ENCODE measurements at regions of chr3 and their contacts with region 1.

Region 1: DNA sequence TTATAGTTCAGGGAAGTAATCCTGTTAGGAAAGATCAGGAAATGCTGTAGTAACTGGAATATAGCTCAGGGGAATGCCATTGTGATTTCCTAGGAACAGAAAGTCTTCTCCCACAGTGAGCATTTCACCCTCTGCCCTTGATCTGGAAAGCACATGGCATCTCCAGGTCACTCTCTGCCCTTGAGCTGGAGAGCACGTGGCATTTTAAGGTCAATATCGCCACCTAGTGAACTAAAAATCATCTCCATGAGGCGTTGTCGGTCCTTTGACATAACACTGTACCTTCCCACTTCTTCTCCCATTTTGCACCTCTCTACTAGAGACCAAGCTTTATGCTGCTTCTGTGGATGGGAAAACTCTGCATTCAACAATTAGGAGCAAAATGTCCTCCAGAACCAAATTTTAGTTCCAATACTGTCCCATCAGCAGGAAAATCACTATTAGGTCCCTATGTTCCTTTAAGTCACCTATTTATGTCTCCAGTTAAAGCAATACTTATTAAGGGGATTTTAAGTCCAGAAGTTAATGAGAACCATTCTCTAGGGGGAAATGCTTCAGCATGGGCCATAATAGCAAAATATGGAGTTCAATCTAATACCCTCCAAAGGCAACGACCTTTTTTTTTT is 54.7 kb upstream of the GK5 start:
- DNase-seq: peak; percentile 64
- H3K4me3 Mint-ChIP-seq: no peak overlapping the region
- H3K27ac Mint-ChIP-seq: no peak overlapping the region
- H3K4me1 Mint-ChIP-seq: peaks cover 13% of the 10 kb centered on the region
- H3K27me3 Mint-ChIP-seq: no peaks in the 10 kb centered on the region
- CTCF ChIP-seq: peak; percentile 84

Region 2: DNA sequence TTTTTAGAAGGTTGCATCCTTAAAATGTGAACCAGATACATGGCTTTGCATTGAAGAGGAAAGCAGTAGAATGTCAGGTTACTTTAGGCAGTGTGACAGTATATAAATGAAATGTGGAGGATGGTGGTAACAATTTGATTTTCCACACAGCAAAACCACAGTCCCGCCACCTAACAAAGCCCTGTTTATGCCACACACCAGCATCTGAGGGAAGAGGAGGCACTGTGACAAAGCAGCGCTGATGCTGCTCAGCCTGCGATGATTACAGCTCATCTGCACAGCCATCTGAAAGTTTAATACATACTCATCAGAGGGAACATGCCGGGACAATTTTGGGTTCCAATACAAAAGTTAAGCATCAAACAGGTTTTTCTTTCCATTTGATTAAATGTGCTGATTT is 533.1 kb before region 1 on chr3:
- CTCF ChIA-PET with region 1: no interaction called
- intact Hi-C with region 1: loop called (anchors 10 kb)
- DNase-seq: no peak
- H3K4me3 Mint-ChIP-seq: no peak overlapping the region
- H3K27ac Mint-ChIP-seq: no peak overlapping the region
- H3K4me1 Mint-ChIP-seq: peaks cover 14% of the 10 kb centered on the region
- H3K27me3 Mint-ChIP-seq: no peaks in the 10 kb centered on the region
- CTCF ChIP-seq: no peak

Region 3: GRCh38 chr3:141959921-141960554 is 320.0 kb before region 1 on chr3:
- CTCF ChIA-PET with region 1: no interaction called
- intact Hi-C with region 1: loop called (anchors 2 kb)
- DNase-seq: no peak
- H3K4me3 Mint-ChIP-seq: no peak overlapping the region
- H3K27ac Mint-ChIP-seq: no peak overlapping the region
- H3K4me1 Mint-ChIP-seq: no peaks in the 10 kb centered on the region
- H3K27me3 Mint-ChIP-seq: no peaks in the 10 kb centered on the region
- CTCF ChIP-seq: no peak

Region 4: GRCh38 chr3:142124243-142124642 is 155.8 kb before region 1 on chr3:
- CTCF ChIA-PET with region 1: interaction called, 24 read pairs
- intact Hi-C with region 1: loop called (anchors 1 kb)
- DNase-seq: no peak
- H3K4me3 Mint-ChIP-seq: no peak overlapping the region
- H3K27ac Mint-ChIP-seq: no peak overlapping the region
- H3K4me1 Mint-ChIP-seq: no peaks in the 10 kb centered on the region
- H3K27me3 Mint-ChIP-seq: peaks cover 12% of the 10 kb centered on the region
- CTCF ChIP-seq: no peak

Region 5: GRCh38 chr3:142180761-142181362 is 99.2 kb before region 1 on chr3:
- CTCF ChIA-PET with region 1: interaction called, 50 read pairs
- intact Hi-C with region 1: loop called (anchors 1 kb)
- DNase-seq: peak; percentile 75
- H3K4me3 Mint-ChIP-seq: no peak overlapping the region
- H3K27ac Mint-ChIP-seq: no peak overlapping the region
- H3K4me1 Mint-ChIP-seq: no peaks in the 10 kb centered on the region
- H3K27me3 Mint-ChIP-seq: no peaks in the 10 kb centered on the region
- CTCF ChIP-seq: peak; percentile 77

Region 6: DNA sequence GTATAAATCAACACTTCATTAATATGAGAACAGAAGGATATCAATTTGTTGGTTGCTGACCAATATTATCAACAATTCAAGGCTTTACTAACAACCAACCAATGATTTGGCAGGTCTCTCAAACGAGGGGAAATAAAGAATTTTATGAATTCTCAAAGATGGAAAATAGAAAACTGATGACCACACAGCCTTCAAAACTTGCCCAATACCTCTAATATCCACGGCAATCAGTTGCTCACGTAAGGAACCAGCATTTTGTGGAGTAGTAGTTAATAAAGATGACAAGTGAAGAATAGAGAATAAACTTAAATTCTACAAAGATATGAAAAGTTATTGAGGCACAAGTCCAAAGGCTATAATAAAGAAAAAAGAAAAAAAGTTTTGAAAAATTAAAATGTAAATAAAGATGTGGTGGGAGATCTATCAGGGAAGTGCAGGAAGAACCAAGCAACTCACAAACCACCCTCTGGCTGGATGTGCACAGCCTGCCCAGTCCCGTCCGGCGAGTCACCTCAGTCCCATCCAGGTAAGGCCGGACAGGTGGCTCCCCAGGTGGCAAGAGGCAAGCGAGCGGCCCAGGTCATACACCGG is 55.5 kb before region 1 on chr3:
- CTCF ChIA-PET with region 1: interaction called, 5 read pairs
- intact Hi-C with region 1: loop called (anchors 2 kb)
- DNase-seq: no peak
- H3K4me3 Mint-ChIP-seq: peak overlapping the region; percentile 94
- H3K27ac Mint-ChIP-seq: peak overlapping the region; percentile 92
- H3K4me1 Mint-ChIP-seq: peaks cover 45% of the 10 kb centered on the region
- H3K27me3 Mint-ChIP-seq: no peaks in the 10 kb centered on the region
- CTCF ChIP-seq: no peak

Measured in Calu3 (cell line).